ENCODE measurements at regions of chr20 and their contacts with region 1.

Region 1: DNA sequence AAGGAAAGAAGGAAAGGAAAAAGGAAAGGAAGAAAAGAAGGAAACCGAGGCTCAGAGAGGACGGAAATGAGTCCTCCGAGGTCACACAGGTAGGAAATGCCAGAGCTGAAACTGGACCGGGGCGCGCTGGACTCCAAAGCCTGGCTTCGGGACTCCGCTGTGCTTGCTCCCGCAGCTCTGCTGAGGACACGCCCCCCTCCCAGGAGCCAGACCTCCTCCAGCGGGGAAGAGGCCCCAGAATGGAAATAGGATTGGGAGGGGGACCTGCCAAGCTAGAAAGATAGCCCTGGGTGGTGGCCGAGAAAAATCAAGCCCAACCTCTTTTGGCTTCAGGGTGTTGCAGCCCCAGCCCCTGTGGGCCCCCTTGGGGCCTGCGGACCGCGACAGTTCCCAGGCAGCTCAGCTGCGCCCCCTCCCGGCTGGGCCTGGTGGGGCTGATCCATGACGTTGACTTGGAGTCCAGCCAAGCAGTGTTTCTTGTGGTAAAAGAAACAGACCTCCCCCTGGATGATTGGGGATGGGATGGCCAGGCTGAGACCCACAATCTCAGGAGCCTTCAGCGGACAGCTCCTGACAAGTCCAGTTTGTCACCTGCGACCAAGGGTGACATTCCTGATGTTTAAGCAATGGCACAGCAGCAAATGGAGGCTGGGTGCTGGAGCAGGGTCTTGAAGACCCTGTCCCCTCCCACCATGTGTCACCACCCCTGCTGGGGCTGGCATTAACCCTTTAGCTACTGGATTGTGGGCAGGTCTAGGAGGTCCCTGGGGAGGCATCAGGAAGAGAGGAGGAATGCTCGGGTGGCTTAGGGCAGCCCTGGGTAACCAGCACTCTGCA is 55.5 kb downstream of the RIPOR3 start:
- DNase-seq: peak; percentile 84 to 85
- ATAC-seq: peak; percentile 64 to 76
- H3K4me3 ChIP-seq: peak overlapping the region; percentile 37
- H3K27ac ChIP-seq: peak overlapping the region; percentile 67 to 95
- H3K4me1 ChIP-seq: peaks cover 36% of the 10 kb centered on the region
- CTCF ChIP-seq: peak; percentile 97
- EP300 ChIP-seq: no peak
- POLR2A ChIP-seq: no peak
- RAD21 ChIP-seq: peak; percentile 56 to 74

Region 2: DNA sequence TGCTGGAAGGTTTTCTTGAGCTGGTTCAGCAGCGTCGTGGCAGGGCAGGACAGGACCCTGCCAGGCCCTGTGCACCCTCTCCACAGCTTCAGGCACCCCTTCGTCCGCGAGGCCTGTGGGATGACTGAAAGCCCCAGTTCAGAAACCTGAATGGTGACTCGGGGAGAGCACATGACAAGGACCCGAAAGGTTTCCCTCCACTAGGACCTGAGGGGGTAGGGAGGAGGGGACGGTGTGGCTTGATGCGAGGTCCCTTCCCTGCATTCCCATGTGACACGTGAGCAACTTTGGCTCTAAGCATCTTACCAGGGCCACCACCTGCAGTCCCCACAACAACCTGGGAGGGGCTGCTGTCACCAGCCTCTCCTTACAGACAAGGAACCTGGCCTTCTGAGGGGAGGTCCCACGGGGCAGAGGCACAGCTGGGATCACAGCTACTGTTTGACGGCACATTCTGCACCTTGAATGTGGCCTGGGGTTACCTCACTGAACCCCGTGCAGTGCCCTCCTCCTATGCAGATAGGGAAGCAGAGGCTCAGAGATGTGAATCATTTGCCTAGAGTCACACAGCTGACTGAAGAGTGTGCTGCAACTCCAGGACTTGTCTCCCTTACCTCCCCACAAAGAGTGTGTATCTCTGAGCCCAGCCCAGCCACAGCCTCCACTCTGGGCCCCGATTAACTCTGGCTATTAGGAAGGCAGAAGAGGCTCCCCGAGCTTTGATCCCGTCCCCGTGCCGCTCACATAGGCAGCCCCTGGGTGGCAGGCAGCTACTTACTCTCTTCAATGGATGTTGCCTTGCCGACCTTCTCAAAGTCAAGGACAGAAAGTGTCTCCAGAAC is 41.1 kb before region 1 on chr20:
- CTCF ChIA-PET with region 1: interaction called, 14 read pairs
- POLR2A ChIA-PET with region 1: no interaction called
- DNase-seq: no peak
- ATAC-seq: peak; percentile 14 to 19; a peak in 4 of 6 replicates
- H3K4me3 ChIP-seq: no peak overlapping the region
- H3K27ac ChIP-seq: no peak overlapping the region
- H3K4me1 ChIP-seq: no peaks in the 10 kb centered on the region
- CTCF ChIP-seq: no peak
- EP300 ChIP-seq: no peak
- POLR2A ChIP-seq: no peak
- RAD21 ChIP-seq: no peak

Region 3: DNA sequence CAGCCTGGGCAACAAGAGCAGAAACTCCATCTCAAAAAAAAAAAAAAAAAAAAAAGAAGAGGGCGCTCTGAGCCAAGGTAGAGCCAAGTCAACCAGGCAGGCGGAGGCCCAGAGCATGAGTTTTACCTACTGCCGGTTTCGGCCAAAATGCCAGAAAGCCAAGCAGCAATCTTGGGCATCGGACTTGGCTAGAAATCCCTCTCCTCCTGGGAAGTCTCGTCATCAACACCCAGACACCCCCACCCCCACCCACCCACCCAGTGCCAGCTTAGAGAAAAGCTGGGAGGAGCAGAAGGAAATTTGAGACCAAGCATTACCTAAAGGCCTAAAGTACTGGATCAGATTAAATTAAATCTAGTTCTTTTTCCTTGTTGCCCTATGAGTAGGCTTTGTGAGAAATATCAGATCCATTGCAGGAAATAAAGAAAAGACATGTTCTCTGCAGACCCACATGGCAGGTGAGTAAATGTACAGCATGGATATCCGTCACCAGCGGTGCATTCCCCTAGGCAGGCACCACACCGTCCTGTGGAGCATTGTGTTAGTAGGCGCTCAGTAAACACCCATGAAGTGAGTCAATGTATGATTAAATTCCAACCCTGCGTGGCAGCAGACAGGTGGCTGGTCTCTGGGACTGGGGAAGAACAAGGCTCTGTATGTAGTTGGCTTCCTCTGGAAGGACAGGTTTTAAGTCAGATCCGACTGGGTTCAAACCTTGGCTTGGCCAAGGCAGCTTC is 34.4 kb after region 1 on chr20:
- CTCF ChIA-PET with region 1: interaction called, 17 read pairs
- POLR2A ChIA-PET with region 1: no interaction called
- DNase-seq: peak; percentile 75 to 84
- ATAC-seq: peak; percentile 92
- H3K4me3 ChIP-seq: no peak overlapping the region
- H3K27ac ChIP-seq: peak overlapping the region; percentile 77 to 88
- H3K4me1 ChIP-seq: peaks cover 32% of the 10 kb centered on the region
- CTCF ChIP-seq: no peak
- EP300 ChIP-seq: no peak
- POLR2A ChIP-seq: no peak
- RAD21 ChIP-seq: peak; percentile 24 to 43; a peak in 3 of 5 replicates

Region 4: GRCh38 chr20:50724851-50725721 is 89.2 kb after region 1 on chr20:
- CTCF ChIA-PET with region 1: interaction called, 20 read pairs
- POLR2A ChIA-PET with region 1: interaction called, 4 read pairs
- DNase-seq: peak; percentile 73 to 86
- ATAC-seq: peak; percentile 89
- H3K4me3 ChIP-seq: no peak overlapping the region
- H3K27ac ChIP-seq: peak overlapping the region; percentile 89 to 96
- H3K4me1 ChIP-seq: peaks cover 65% of the 10 kb centered on the region
- CTCF ChIP-seq: no peak
- EP300 ChIP-seq: peak in 1 of 2 experiments; percentile 74; a peak in 1 of 5 replicates
- POLR2A ChIP-seq: no peak
- RAD21 ChIP-seq: peak; percentile 12 to 28; a peak in 1 of 5 replicates

Region 5: GRCh38 chr20:50750145-50750671 is 114.3 kb after region 1 on chr20:
- CTCF ChIA-PET with region 1: interaction called, 64 read pairs
- POLR2A ChIA-PET with region 1: no interaction called
- DNase-seq: no peak
- ATAC-seq: no peak
- H3K4me3 ChIP-seq: no peak overlapping the region
- H3K27ac ChIP-seq: peak overlapping the region in 1 of 2 experiments; percentile 36; a peak in 2 of 6 replicates
- H3K4me1 ChIP-seq: peaks cover 53% of the 10 kb centered on the region
- CTCF ChIP-seq: no peak
- EP300 ChIP-seq: no peak
- POLR2A ChIP-seq: no peak
- RAD21 ChIP-seq: no peak

Measured in A549 (cell line).